Sciatic nerve (tissue), 2 donors: ENCODE measurements at regions of chr5 and their contacts with region 1.

Region 1: GRCh38 chr5:16934123-16934522 is 2.0 kb downstream of the MYO10 start:
- DNase-seq: peak; percentile 77
- ATAC-seq: peak; percentile 69

Region 2: GRCh38 chr5:16916262-16916865 is 17.8 kb before region 1 on chr5:
- intact Hi-C with region 1: no loop called
- DNase-seq: no peak
- ATAC-seq: no peak

Region 3: GRCh38 chr5:16957304-16958196 is 23.4 kb after region 1 on chr5:
- intact Hi-C with region 1: no loop called
- DNase-seq: no peak
- ATAC-seq: no peak

Region 4: DNA sequence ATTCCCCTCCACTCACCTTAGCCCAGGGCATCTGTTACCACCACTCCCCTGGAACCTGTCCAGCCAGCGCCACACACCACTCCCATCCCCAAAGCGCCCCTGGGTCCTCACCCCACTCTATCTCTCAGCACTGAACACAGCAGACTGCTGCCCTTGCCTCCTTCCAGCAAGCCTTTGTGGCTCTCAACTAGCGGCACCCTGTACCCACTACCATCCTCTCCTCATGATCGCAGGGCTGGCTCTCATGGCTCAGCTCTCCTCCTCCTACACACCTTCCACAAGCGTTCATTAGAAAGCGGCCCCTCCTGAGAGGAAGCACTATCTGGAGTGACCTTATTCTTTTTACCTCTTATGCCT is 270.0 kb after region 1 on chr5:
- intact Hi-C with region 1: loop called (anchors 10 kb)
- DNase-seq: no peak
- ATAC-seq: no peak